Activated T-helper 1 cell treated with anti-CD3 and anti-CD28 coated beads, Interleukin-12 subunit alpha, Interleukin-12 subunit beta, Interleukin-2, Interleukin-4 antibody, amounts not matched to agents 30 ng/mL and 10 ng/mL and 1 ng/mL, durations not matched to agents 14 hours and 24 hours and 36 hours (primary cell): ENCODE measurements at regions of chr19 and their contacts with region 1.

Region 1: DNA sequence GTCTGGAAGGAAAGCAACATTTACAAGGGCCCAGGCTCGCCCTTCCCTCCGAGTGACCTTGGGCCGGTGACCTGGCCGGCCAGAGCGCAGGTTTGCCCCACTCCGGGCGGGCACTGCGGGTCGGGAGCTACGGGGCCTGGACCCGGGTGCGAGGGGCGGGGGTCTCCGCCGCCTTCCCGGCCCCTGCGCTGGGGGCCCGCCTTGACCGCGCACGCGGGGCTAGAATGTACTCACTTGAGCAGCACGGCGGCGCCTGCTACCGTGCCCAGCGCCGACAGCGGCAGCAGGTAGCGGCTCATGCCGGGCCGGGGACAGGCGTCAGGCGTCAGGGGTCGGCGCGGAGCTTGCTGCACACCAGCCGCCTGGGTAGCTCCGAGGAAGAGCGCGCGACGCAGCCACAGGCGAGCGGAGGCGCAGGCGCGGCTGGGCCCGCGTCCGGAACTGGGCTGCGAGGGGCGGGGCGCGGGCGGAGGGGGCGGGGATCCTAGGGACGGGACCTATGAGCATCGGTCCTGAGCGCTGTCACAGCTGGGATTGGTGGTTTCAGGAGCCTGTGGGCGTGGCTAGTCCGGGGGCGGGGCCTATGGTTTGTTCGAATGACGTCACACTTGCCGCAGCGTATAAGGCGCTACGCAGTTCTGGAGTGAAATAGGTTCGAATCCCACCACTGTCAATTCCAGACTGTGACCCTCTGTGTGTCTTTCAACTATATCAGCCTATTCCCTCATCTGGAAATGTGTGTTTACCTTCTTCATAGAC is at the start of gene RDH13:
- DNase-seq: peak; percentile 96
- H3K4me3 Mint-ChIP-seq: peak within 1 kb of the TSS; percentile 89
- H3K27ac Mint-ChIP-seq: peak within 1 kb of the TSS; percentile 75
- H3K4me1 Mint-ChIP-seq: peaks cover 12% of the 10 kb centered on the region
- H3K27me3 Mint-ChIP-seq: peaks cover 18% of the 10 kb centered on the region
- total RNA-seq, gene RDH13: 21.7 and 26.4 TPM in 2 replicates

Region 2: GRCh38 chr19:55005684-55006488 is 57.0 kb before region 1 on chr19:
- intact Hi-C with region 1: loop called (anchors 1 kb)
- DNase-seq: peak; percentile 59
- H3K4me3 Mint-ChIP-seq: peak overlapping the region; percentile 81
- H3K27ac Mint-ChIP-seq: peak overlapping the region; percentile 92
- H3K4me1 Mint-ChIP-seq: peaks cover 7% of the 10 kb centered on the region
- H3K27me3 Mint-ChIP-seq: peaks cover 2% of the 10 kb centered on the region

Region 3: GRCh38 chr19:55041617-55042349 is 21.1 kb before region 1 on chr19:
- intact Hi-C with region 1: loop called (anchors 1 kb)
- DNase-seq: peak; percentile 5
- H3K4me3 Mint-ChIP-seq: peak overlapping the region; percentile 80
- H3K27ac Mint-ChIP-seq: peak overlapping the region; percentile 86
- H3K4me1 Mint-ChIP-seq: peaks cover 20% of the 10 kb centered on the region
- H3K27me3 Mint-ChIP-seq: no peaks in the 10 kb centered on the region

Region 4: DNA sequence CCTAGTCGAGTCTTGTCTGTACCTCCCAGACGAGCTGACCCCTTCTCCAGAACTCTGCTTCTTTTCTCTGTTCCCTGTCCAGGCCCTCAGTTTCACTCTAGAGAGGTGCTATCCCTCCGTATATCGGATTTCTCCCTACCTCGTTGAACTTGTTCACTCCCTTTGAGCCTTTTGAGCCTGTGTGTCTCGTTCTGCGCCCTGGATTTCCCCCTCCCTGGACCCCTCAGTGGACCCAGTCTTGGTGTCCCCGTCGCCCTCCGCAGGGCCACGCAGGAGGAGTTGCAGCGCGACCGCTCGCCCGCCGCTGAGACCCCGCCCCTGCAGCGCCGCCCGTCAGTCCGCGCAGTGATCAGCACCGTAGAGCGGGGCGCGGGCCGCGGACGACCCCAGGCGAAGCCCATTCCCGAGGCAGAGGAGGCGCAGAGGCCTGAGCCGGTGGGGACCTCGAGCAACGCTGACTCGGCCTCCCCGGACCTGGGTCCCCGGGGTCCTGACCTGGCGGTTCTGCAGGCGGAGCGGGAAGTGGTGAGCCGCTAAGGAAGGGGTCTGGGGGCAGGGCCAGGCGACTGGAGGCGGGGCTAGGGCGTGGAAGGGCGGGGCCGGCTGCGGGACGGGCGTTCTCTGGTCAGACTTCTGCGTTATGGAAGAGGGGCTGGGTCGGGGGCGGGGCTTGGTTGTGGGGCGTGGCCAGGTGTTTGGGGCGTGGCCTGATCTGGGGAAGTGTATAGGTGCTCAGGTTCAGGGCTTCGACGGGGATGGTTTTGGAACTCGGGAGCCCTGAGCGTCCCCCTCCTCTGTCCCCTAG is 18.3 kb after region 1 on chr19:
- intact Hi-C with region 1: loop called (anchors 1 kb)
- DNase-seq: peak; percentile 92
- H3K4me3 Mint-ChIP-seq: peak overlapping the region; percentile 88
- H3K27ac Mint-ChIP-seq: peak overlapping the region; percentile 67
- H3K4me1 Mint-ChIP-seq: peaks cover 23% of the 10 kb centered on the region
- H3K27me3 Mint-ChIP-seq: peaks cover 35% of the 10 kb centered on the region

Region 5: DNA sequence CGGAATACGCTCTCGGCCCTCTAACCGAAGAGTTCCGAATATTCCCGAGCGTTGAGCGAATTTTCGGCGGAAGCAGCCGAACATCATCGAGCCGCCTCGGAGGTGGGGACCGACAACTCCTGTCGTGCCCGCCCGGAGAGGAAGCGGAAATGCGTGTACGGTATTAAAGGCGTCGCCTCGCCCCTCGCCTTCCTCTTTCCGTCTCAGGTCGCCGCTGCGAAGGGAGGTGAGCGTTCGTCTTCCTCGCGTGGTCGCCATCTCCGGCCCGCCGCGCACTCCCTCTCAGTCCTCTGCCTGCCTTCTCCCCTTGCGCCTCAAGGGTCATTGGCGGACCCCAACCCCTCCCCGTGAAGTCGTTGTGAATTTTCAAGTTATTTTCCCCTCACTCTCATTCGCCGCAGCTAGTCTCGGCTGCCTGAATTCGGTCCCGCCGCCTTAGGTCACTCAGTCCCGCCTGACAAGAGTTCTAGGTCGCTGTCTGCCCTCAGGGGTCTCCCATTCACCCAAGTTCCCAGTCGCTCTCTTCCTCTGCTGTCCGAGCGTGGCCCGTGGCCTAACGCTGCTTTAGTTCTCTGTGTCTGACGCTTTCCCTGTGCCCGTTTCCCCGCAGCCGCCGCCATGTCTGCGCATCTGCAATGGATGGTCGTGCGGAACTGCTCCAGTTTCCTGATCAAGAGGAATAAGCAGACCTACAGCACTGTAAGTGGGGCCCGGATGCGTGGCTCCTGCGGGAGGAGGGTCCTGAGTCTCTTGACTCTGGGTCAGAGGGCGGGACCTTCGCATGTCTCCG is 323.0 kb after region 1 on chr19 and contains the start of gene RPL28:
- intact Hi-C with region 1: loop called (anchors 1 kb)
- DNase-seq: peak; percentile 99
- H3K4me3 Mint-ChIP-seq: peak within 1 kb of the TSS; percentile 99
- H3K27ac Mint-ChIP-seq: peak within 1 kb of the TSS; percentile 96
- H3K4me1 Mint-ChIP-seq: peaks cover 43% of the 10 kb centered on the region
- H3K27me3 Mint-ChIP-seq: no peaks in the 10 kb centered on the region
- total RNA-seq, gene RPL28: 1,835 and 1,847 TPM in 2 replicates